Naive thymus-derived CD4-positive, alpha-beta T cell (primary cell): ENCODE measurements at regions of chr7 and their contacts with region 1.

Region 1: GRCh38 chr7:87876040-87876868 is at the starts of genes DBF4 and SLC25A40:
- DNase-seq: peak; percentile 88 to 98 (median 95)
- ATAC-seq: peak; percentile 95
- H3K4me3 ChIP-seq: peak within 1 kb of the TSS; percentile 93
- H3K4me3 Mint-ChIP-seq: peak within 1 kb of the TSS; percentile 69 to 96 (median 93)
- H3K27ac ChIP-seq: peak within 1 kb of the TSS; percentile 92
- H3K27ac Mint-ChIP-seq: peak within 1 kb of the TSS; percentile 82 to 98 (median 97)
- H3K4me1 ChIP-seq: peaks cover 6 to 13% of the 10 kb centered on the region in 2 donors
- H3K4me1 Mint-ChIP-seq: peaks cover 27 to 64% (median 54%) of the 10 kb centered on the region in 7 donors
- H3K27me3 ChIP-seq: no peaks in the 10 kb centered on the region
- H3K27me3 Mint-ChIP-seq: no peaks in the 10 kb centered on the region
- total RNA-seq, gene DBF4: 31.2 to 46.5 (median 38.4) TPM
- total RNA-seq, gene SLC25A40: 15.2 to 50.2 (median 27.5) TPM

Region 2: DNA sequence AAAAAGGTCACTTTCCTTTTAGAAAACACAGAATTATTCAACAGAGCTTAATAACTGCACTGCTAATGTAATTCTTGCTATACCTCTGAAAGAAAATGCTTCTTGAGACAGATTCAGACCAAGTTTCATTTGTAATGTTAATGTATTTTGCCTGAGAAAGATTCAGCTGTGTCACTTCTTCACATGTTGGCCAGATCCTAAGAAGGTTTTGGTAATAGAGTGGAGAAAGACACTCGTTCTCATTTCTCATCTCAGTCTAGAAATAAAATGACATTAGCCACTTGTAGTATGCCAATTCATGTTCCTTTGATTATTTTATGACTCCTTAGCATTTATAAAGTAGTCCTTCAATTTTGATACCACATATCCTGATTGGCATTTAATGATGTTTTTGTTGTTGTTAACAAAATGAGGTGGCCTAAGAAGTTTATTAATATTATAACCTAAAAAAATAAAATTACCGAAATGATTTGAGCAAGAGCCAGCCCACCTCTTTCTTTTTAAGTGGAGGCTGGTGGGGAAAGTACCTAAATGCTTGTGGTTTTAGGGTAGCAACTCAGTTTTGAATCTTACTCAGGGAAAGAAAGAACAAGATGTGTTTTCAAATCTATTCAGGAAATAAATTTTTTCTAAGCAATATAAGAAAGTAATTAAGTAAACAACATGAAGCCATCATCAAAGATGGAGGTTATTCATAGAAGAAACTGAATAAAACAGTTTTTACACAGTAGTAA is 800.4 kb before region 1 on chr7:
- CTCF ChIA-PET with region 1: no interaction called
- POLR2A ChIA-PET with region 1: no interaction called
- intact Hi-C with region 1: no loop called
- DNase-seq: no peak
- ATAC-seq: no peak
- H3K4me3 ChIP-seq: no peak overlapping the region
- H3K4me3 Mint-ChIP-seq: no peak overlapping the region
- H3K27ac ChIP-seq: no peak overlapping the region
- H3K27ac Mint-ChIP-seq: no peak overlapping the region
- H3K4me1 ChIP-seq: peaks cover 0 to 3% of the 10 kb centered on the region in 2 donors
- H3K4me1 Mint-ChIP-seq: peaks cover 0 to 14% (median 0%) of the 10 kb centered on the region in 7 donors
- H3K27me3 ChIP-seq: no peaks in the 10 kb centered on the region
- H3K27me3 Mint-ChIP-seq: peaks cover 0 to 24% (median 14%) of the 10 kb centered on the region in 5 donors

Region 3: DNA sequence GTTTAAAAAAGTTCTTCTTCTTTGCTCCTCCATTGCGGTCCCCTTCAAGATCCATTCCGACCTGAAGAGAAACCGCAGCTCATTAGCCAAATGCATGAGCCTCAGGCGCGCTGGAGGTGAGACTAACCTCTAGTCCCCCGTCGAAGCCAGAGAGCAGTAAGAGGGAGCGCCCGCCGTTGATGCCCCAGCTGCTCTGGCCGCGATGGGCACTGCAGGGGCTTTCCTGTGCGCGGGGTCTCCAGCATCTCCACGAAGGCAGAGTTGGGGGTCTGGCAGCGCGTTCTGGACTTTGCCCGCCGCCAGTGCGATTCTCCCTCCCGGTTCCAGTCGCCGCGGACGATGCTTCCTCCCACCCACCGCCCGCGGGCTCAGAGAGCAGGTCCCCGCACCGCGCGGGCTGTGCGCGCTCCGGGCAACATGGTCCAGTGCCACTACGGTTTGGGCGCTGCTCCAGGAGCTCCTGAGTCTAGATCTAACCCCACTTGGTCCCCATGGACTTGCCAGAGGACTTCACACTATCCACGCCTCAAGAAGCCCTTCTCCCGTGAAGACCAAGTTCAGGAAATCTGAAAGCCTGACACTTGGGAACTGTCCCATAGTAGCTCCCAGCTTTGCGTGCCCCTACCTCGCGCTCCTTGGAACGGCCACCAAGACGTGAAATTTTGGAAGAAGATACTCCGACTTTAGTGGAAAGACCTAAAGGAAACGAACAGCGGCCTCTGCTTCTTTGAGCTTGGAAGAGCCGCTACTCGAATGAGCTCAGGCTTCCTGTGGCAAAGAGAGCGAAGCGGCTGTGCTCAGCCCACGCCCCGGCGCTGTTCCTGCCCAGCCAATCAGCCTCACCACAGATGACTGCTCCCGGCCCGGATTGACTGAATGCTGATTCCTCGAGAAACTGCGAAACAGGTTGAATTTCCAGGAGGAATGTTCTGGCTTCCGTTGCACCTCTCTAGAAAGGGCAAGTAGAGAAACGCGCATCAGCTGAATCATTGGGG is 275.8 kb before region 1 on chr7 and contains the start of gene ABCB1:
- CTCF ChIA-PET with region 1: no interaction called
- POLR2A ChIA-PET with region 1: no interaction called
- intact Hi-C with region 1: loop called in 1 of 2 experiments (anchors 2 kb)
- DNase-seq: peak; percentile 19 to 60 (median 49)
- ATAC-seq: peak; percentile 85
- H3K4me3 ChIP-seq: peak within 1 kb of the TSS; percentile 82
- H3K4me3 Mint-ChIP-seq: peak within 1 kb of the TSS; percentile 76 to 95 (median 85)
- H3K27ac ChIP-seq: peak within 1 kb of the TSS; percentile 68
- H3K27ac Mint-ChIP-seq: peak within 1 kb of the TSS; percentile 29 to 89 (median 81)
- H3K4me1 ChIP-seq: peaks cover 3 to 6% of the 10 kb centered on the region in 2 donors
- H3K4me1 Mint-ChIP-seq: peaks cover 13 to 45% (median 28%) of the 10 kb centered on the region in 7 donors
- H3K27me3 ChIP-seq: no peaks in the 10 kb centered on the region
- H3K27me3 Mint-ChIP-seq: peaks cover 0 to 50% (median 45%) of the 10 kb centered on the region in 5 donors
- total RNA-seq, gene ABCB1: 3.0 to 14.3 (median 10.4) TPM

Region 4: GRCh38 chr7:87837597-87837996 is 38.7 kb before region 1 on chr7:
- CTCF ChIA-PET with region 1: no interaction called
- POLR2A ChIA-PET with region 1: interaction called, 3 read pairs
- intact Hi-C with region 1: loop called in 1 of 2 experiments (anchors 5 kb)
- DNase-seq: no peak
- ATAC-seq: no peak
- H3K4me3 ChIP-seq: no peak overlapping the region
- H3K4me3 Mint-ChIP-seq: no peak overlapping the region
- H3K27ac ChIP-seq: no peak overlapping the region
- H3K27ac Mint-ChIP-seq: no peak overlapping the region
- H3K4me1 ChIP-seq: no peaks in the 10 kb centered on the region
- H3K4me1 Mint-ChIP-seq: peaks cover 0 to 2% (median 0%) of the 10 kb centered on the region in 7 donors
- H3K27me3 ChIP-seq: no peaks in the 10 kb centered on the region
- H3K27me3 Mint-ChIP-seq: no peaks in the 10 kb centered on the region

Region 5: DNA sequence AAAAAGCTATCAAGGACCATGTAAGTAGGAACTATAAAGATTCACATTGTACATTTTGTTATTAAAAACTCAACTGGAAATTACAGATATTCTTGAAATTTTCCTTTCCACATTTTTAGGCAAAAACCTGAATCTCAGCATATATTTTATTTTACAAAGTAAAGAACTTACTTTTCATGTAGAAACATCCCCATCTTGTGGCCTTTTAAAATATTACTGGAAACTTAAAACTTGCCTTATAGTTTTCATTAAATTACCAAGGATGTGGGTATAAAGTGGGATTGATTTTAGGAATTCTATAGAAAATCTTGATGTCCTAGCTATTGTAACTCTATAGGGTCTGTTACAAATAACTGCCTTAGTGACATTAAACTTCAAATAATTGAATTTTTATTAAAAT is 10.6 kb after region 1 on chr7:
- CTCF ChIA-PET with region 1: interaction called, 12 read pairs
- POLR2A ChIA-PET with region 1: no interaction called
- intact Hi-C with region 1: loop called (anchors 1 kb)
- DNase-seq: peak in 6 of 9 donors; percentile 8 to 49 (median 43)
- ATAC-seq: peak; percentile 48
- H3K4me3 ChIP-seq: no peak overlapping the region
- H3K4me3 Mint-ChIP-seq: no peak overlapping the region
- H3K27ac ChIP-seq: no peak overlapping the region
- H3K27ac Mint-ChIP-seq: no peak overlapping the region
- H3K4me1 ChIP-seq: no peaks in the 10 kb centered on the region
- H3K4me1 Mint-ChIP-seq: peaks cover 5 to 28% (median 13%) of the 10 kb centered on the region in 7 donors
- H3K27me3 ChIP-seq: no peaks in the 10 kb centered on the region
- H3K27me3 Mint-ChIP-seq: no peaks in the 10 kb centered on the region

Region 6: GRCh38 chr7:87910138-87910537 is 33.9 kb after region 1 on chr7:
- CTCF ChIA-PET with region 1: no interaction called
- POLR2A ChIA-PET with region 1: no interaction called
- intact Hi-C with region 1: no loop called
- DNase-seq: no peak
- ATAC-seq: no peak
- H3K4me3 ChIP-seq: no peak overlapping the region
- H3K4me3 Mint-ChIP-seq: no peak overlapping the region
- H3K27ac ChIP-seq: no peak overlapping the region
- H3K27ac Mint-ChIP-seq: no peak overlapping the region
- H3K4me1 ChIP-seq: no peaks in the 10 kb centered on the region
- H3K4me1 Mint-ChIP-seq: peaks cover 0 to 20% (median 11%) of the 10 kb centered on the region in 7 donors
- H3K27me3 ChIP-seq: no peaks in the 10 kb centered on the region
- H3K27me3 Mint-ChIP-seq: peaks cover 0 to 4% (median 0%) of the 10 kb centered on the region in 5 donors

Region 7: GRCh38 chr7:87920578-87920977 is 44.3 kb after region 1 on chr7:
- CTCF ChIA-PET with region 1: no interaction called
- POLR2A ChIA-PET with region 1: no interaction called
- intact Hi-C with region 1: no loop called
- DNase-seq: no peak
- ATAC-seq: no peak
- H3K4me3 ChIP-seq: no peak overlapping the region
- H3K4me3 Mint-ChIP-seq: no peak overlapping the region
- H3K27ac ChIP-seq: no peak overlapping the region
- H3K27ac Mint-ChIP-seq: no peak overlapping the region
- H3K4me1 ChIP-seq: no peaks in the 10 kb centered on the region
- H3K4me1 Mint-ChIP-seq: no peaks in the 10 kb centered on the region
- H3K27me3 ChIP-seq: peaks cover 0 to 3% of the 10 kb centered on the region in 2 donors
- H3K27me3 Mint-ChIP-seq: peaks cover 0 to 18% (median 6%) of the 10 kb centered on the region in 5 donors

Region 8: GRCh38 chr7:88219781-88220747 is 343.8 kb after region 1 on chr7 and contains the start of gene SRI:
- CTCF ChIA-PET with region 1: no interaction called
- POLR2A ChIA-PET with region 1: interaction called, 3 read pairs
- intact Hi-C with region 1: loop called (anchors 1 to 2 kb)
- DNase-seq: peak; percentile 85 to 95 (median 93)
- ATAC-seq: peak; percentile 98
- H3K4me3 ChIP-seq: peak within 1 kb of the TSS; percentile 97
- H3K4me3 Mint-ChIP-seq: peak within 1 kb of the TSS; percentile 95 to 99 (median 96)
- H3K27ac ChIP-seq: peak within 1 kb of the TSS; percentile 86
- H3K27ac Mint-ChIP-seq: peak within 1 kb of the TSS; percentile 90 to 99 (median 94)
- H3K4me1 ChIP-seq: peaks cover 15 to 18% of the 10 kb centered on the region in 2 donors
- H3K4me1 Mint-ChIP-seq: peaks cover 13 to 42% (median 34%) of the 10 kb centered on the region in 7 donors
- H3K27me3 ChIP-seq: peaks cover 0 to 4% of the 10 kb centered on the region in 2 donors
- H3K27me3 Mint-ChIP-seq: peaks cover 0 to 8% (median 0%) of the 10 kb centered on the region in 5 donors
- total RNA-seq, gene SRI: 39.9 to 131 (median 60.0) TPM